Activated CD8-positive, alpha-beta T cell treated with anti-CD3 and anti-CD28 coated beads, Interleukin-2, amount 10 ng/mL, durations not matched to agents 7 days and 5 days (primary cell): ENCODE measurements at regions of chr3 and their contacts with region 1.

Region 1: DNA sequence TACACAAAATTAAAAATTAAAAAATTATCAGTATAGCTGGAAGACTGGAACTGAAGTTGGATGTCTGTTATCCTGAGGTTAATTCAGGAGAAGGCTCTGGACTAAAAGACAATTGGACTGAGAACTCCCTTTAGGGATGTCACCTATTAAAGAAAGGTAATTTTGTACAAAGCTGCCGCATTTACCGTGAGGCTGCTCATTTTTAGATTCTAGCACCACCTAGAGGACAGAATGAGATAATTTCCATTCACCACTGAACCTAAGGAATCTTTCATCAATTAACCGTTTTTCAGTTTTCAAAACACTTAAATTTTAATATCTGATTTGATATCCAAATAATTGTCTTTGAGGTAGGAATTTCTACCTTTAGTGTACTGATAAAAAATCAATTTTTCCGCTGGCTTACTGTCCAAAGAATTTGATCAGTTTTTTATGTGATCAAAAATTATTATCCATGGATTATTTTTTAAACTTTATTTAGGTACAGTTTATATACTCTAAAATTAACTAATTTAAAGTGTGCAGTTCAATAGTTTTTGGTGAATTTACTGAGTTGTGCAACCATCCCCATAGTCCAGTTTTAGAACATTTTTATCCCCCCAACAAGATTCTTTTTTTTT is 106.7 kb upstream of the TNIK start:
- DNase-seq: no peak
- ATAC-seq: peak; percentile 72
- H3K4me3 Mint-ChIP-seq: no peak overlapping the region
- H3K27ac Mint-ChIP-seq: no peak overlapping the region
- H3K4me1 Mint-ChIP-seq: peaks cover 17% of the 10 kb centered on the region
- H3K27me3 Mint-ChIP-seq: peaks cover 13% of the 10 kb centered on the region

Region 2: DNA sequence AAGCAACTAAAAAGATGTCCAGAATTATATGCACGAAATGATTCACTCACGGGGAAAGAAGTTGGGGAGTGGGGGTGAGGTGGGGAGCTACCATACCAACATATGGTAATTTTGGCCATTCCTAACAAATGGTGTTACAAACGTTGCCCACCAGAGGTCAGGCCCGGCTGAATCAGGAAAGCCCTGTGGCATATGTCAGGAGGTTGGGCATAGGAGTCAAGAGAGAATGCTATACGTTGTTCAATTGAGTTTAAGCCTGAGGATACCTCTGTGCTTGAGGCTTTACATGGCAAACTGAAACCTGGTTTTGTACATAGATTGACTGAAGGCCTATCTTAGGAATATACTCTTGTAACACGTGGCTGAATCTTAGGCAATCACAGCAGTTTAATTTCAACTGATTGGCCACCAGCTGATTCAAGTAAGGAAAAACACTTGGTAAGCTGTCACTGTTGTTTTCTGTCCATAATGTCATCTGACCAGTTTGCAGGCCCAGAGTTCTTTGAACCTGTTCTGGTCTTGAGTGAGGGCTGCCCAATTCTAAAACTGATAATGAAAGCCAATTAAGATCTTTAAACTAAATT is 517.0 kb before region 1 on chr3:
- CTCF ChIA-PET with region 1: interaction called, 43 read pairs
- POLR2A ChIA-PET with region 1: no interaction called
- DNase-seq: peak; percentile 64
- ATAC-seq: peak; percentile 83
- H3K4me3 Mint-ChIP-seq: no peak overlapping the region
- H3K27ac Mint-ChIP-seq: no peak overlapping the region
- H3K4me1 Mint-ChIP-seq: no peaks in the 10 kb centered on the region
- H3K27me3 Mint-ChIP-seq: peaks cover 15% of the 10 kb centered on the region

Region 3: GRCh38 chr3:171187706-171188290 is 379.1 kb before region 1 on chr3:
- CTCF ChIA-PET with region 1: interaction called, 14 read pairs
- POLR2A ChIA-PET with region 1: no interaction called
- DNase-seq: peak; percentile 28
- ATAC-seq: no peak
- H3K4me3 Mint-ChIP-seq: no peak overlapping the region
- H3K27ac Mint-ChIP-seq: no peak overlapping the region
- H3K4me1 Mint-ChIP-seq: peaks cover 16% of the 10 kb centered on the region
- H3K27me3 Mint-ChIP-seq: no peaks in the 10 kb centered on the region

Region 4: DNA sequence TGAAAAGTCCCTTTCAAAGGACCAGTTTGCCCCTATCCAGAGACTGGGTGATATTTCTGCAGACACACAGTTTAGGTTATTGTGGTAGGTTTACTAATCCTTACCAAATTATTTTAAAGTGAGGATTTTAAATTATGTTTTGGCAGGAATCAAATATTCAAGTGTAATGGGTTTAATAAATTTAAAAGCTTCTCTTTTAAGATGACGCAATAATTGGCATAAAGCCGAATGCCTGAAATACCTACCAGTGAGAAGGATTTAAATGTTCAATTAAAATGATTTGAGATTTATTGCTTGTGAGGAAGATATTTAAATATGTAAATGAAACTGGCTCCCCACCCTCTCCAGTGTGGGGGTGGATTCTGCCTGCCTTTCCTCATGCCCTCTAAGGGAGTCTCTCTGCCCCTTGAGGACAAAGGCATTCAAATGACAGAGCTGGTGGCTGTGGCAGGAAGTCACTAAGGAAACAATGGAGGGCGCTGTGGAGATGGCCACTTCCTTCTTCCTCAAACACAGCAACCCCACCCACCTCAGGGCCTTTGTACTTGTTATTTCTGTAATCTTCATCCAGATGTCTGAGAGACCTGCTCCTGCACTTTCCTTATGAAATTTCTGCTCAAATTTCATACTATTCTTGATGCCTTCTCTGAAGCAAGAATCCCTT is 238.4 kb before region 1 on chr3:
- CTCF ChIA-PET with region 1: interaction called, 13 read pairs
- POLR2A ChIA-PET with region 1: no interaction called
- DNase-seq: peak; percentile 80
- ATAC-seq: peak; percentile 91
- H3K4me3 Mint-ChIP-seq: peak overlapping the region; percentile 1
- H3K27ac Mint-ChIP-seq: peak overlapping the region; percentile 60
- H3K4me1 Mint-ChIP-seq: peaks cover 22% of the 10 kb centered on the region
- H3K27me3 Mint-ChIP-seq: no peaks in the 10 kb centered on the region

Region 5: GRCh38 chr3:171548917-171549316 is 18.0 kb before region 1 on chr3:
- CTCF ChIA-PET with region 1: interaction called, 15 read pairs
- POLR2A ChIA-PET with region 1: no interaction called
- DNase-seq: no peak
- ATAC-seq: no peak
- H3K4me3 Mint-ChIP-seq: no peak overlapping the region
- H3K27ac Mint-ChIP-seq: no peak overlapping the region
- H3K4me1 Mint-ChIP-seq: no peaks in the 10 kb centered on the region
- H3K27me3 Mint-ChIP-seq: no peaks in the 10 kb centered on the region